AG04450 (cell line): ENCODE measurements at regions of chr16 and their contacts with region 1.

Region 1: GRCh38 chr16:68237243-68238028 is 1.5 kb upstream of the ESRP2 start:
- DNase-seq: peak; percentile 94
- H3K4me3 ChIP-seq: peak overlapping the region; percentile 69
- H3K27ac ChIP-seq: peak overlapping the region; percentile 94
- H3K27me3 ChIP-seq: no peaks in the 10 kb centered on the region
- CTCF ChIP-seq: no peak

Region 2: GRCh38 chr16:68214726-68215125 is 22.7 kb before region 1 on chr16:
- CTCF ChIA-PET with region 1: no interaction called
- POLR2A ChIA-PET with region 1: no interaction called
- DNase-seq: no peak
- H3K4me3 ChIP-seq: no peak overlapping the region
- H3K27ac ChIP-seq: no peak overlapping the region
- H3K27me3 ChIP-seq: no peaks in the 10 kb centered on the region
- CTCF ChIP-seq: no peak

Region 3: GRCh38 chr16:68328151-68328859 is 90.9 kb after region 1 on chr16:
- CTCF ChIA-PET with region 1: interaction called, 14 read pairs
- POLR2A ChIA-PET with region 1: no interaction called
- DNase-seq: peak; percentile 67
- H3K4me3 ChIP-seq: no peak overlapping the region
- H3K27ac ChIP-seq: no peak overlapping the region
- H3K27me3 ChIP-seq: no peaks in the 10 kb centered on the region
- CTCF ChIP-seq: peak; percentile 95